Activated T-helper 1 cell treated with anti-CD3 and anti-CD28 coated beads, Interleukin-12 subunit alpha, Interleukin-12 subunit beta, Interleukin-2, Interleukin-4 antibody, amounts not matched to agents 30 ng/mL and 10 ng/mL and 1 ng/mL, durations not matched to agents 14 hours and 24 hours and 36 hours (primary cell): ENCODE measurements at regions of chr9 and their contacts with region 1.

Region 1: DNA sequence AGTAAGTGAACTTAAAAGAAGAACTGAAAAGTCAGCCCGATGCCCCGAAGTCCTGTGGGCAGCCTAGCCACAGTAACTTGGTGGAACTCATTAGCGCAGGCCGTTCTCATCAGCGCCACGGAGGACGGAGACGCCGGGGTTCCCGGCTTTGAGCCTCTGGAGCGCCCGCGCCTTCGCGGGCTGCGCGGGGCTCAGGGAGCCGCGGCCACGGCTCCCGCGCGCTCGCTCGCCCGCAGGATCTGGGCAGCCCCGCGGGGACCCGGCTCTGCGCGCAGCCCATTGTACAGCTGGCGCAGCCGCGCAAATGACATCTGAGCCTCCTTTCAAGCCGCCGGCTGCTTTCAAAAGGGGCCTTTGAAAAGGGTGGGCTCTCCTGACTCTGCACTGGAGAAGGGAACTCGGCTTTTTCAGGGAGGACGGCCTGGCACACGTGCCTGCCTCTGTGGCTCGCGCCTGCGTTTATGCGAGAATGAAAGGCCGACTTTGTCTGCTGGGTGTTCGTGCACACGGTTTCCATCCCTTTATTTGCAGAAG is 40.7 kb downstream of the TLR4 start:
- DNase-seq: no peak
- H3K4me3 Mint-ChIP-seq: peak overlapping the region; percentile 37
- H3K27ac Mint-ChIP-seq: no peak overlapping the region
- H3K4me1 Mint-ChIP-seq: peaks cover 6% of the 10 kb centered on the region
- H3K27me3 Mint-ChIP-seq: peaks cover 26% of the 10 kb centered on the region

Region 2: GRCh38 chr9:117718085-117718484 is 26.8 kb before region 1 on chr9:
- intact Hi-C with region 1: loop called (anchors 2 kb)
- DNase-seq: no peak
- H3K4me3 Mint-ChIP-seq: no peak overlapping the region
- H3K27ac Mint-ChIP-seq: no peak overlapping the region
- H3K4me1 Mint-ChIP-seq: peaks cover 19% of the 10 kb centered on the region
- H3K27me3 Mint-ChIP-seq: no peaks in the 10 kb centered on the region

Region 3: DNA sequence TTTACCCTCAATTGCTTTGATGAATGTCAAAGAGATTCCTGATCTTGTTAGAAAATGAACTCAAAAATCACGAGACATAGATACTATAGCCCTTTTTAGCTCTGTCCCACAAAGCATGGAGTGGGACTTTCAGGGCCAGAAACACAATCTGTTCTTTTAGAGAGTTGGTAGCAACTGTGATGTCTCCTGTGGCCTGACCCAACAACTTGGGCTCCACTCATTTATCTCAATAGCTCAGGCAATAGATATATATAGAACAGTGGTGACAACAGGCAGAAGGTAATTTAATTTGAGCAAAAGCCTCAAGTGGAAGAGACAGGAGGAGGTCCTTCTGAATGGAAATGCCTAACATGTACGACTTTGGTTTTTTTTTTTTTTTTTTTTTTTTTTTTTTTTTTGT is 15.5 kb before region 1 on chr9:
- intact Hi-C with region 1: no loop called
- DNase-seq: no peak
- H3K4me3 Mint-ChIP-seq: no peak overlapping the region
- H3K27ac Mint-ChIP-seq: no peak overlapping the region
- H3K4me1 Mint-ChIP-seq: no peaks in the 10 kb centered on the region
- H3K27me3 Mint-ChIP-seq: peaks cover 10% of the 10 kb centered on the region